CD4-positive, alpha-beta memory T cell (primary cell): ENCODE measurements at regions of chr2 and their contacts with region 1.

Region 1: DNA sequence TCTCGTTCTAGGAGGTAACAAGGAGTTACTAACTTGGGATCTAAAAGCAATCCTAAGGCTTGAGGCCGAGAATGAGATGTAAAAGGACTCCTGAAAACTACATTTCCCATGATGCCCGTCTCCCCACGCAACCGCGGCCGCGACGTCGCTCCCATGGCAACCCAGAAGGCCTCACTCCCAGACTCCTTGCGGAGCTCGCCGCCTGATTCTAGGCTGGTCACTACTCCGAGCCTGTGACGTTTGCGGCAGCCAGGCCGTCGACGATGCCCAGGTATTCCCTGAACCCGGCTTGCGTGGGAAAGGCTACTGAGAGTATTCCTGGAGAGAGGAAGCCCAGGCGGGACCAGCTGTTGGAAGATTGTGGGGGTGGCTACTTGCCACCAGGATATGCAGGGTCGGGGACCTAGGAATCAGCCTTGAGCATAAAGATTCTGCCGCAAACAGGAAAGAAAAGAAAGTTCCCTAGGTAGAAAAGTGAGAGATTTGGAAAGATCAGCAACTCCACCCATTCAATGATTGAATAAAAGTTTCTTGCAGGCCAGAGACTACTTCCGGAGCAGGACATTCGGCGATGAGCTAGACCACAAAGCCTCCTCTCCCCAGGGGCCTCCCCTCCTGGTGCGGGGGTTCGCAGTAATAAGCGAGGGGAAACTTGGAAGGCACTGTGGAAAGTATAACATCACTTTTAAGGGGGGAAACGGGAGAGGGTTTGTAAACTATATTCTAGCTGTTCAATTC is at the start of gene DYNC2LI1:
- DNase-seq: peak; percentile 65 to 75 (median 70)
- H3K4me3 ChIP-seq: peak within 1 kb of the TSS; percentile 93 to 100
- H3K4me3 Mint-ChIP-seq: peak within 1 kb of the TSS; percentile 93 to 98 (median 96)
- H3K27ac ChIP-seq: peak within 1 kb of the TSS; percentile 53
- H3K27ac Mint-ChIP-seq: peak within 1 kb of the TSS; percentile 58 to 97 (median 91)
- H3K4me1 ChIP-seq: peaks cover 12% of the 10 kb centered on the region
- H3K4me1 Mint-ChIP-seq: peaks cover 7 to 13% (median 11%) of the 10 kb centered on the region in 4 donors
- H3K27me3 ChIP-seq: no peaks in the 10 kb centered on the region
- H3K27me3 Mint-ChIP-seq: peaks cover 3% of the 10 kb centered on the region in 2 donors
- total RNA-seq, gene DYNC2LI1: 2.9 to 3.9 TPM

Region 2: DNA sequence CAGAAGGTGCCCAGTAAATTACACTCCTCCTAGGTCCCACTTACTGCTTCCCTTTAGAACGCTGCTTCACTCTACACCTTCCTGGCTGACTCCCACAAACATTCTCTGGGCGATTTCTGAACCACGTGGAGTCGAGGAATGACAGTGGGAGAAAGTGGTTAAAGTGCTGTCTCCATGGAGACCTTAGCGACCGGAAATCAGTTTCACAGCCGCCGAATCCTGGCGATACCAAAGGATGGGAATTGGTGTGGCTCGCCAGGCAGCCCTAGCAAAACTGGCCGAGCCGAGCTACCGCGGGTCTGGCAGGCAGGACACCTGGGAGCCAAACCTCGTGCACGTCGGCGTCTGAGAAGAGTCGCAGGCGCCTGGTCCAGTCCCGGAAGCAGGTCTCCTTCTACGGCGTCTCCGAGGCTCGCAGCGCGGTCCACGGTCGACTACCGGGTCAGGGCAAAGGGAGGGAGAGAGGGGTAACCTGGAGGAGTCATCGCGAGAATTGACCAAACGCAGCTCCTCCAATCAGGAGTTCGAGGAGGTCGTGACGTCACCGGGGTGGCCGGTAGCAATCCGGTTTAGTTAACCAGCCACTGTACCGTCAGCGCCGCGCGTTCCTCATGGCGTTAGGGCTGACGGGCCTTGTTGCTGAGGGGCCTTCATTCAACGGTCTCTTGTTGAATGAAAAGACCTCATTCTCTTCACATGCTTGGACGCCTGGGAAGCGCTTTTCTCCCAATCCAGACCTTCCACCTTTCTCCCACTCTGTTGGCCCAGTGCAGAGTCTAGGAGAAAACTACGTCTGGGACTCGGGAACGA is 178.2 kb before region 1 on chr2 and contains the start of gene THADA:
- CTCF ChIA-PET with region 1: no interaction called
- POLR2A ChIA-PET with region 1: no interaction called
- intact Hi-C with region 1: no loop called
- DNase-seq: peak; percentile 93 to 95 (median 95)
- H3K4me3 ChIP-seq: peak within 1 kb of the TSS; percentile 73 to 82
- H3K4me3 Mint-ChIP-seq: peak within 1 kb of the TSS; percentile 91 to 97 (median 96)
- H3K27ac ChIP-seq: peak within 1 kb of the TSS; percentile 89
- H3K27ac Mint-ChIP-seq: peak within 1 kb of the TSS; percentile 97 to 99 (median 99)
- H3K4me1 ChIP-seq: peaks cover 28% of the 10 kb centered on the region
- H3K4me1 Mint-ChIP-seq: peaks cover 22 to 44% (median 30%) of the 10 kb centered on the region in 4 donors
- H3K27me3 ChIP-seq: no peaks in the 10 kb centered on the region
- H3K27me3 Mint-ChIP-seq: no peaks in the 10 kb centered on the region
- total RNA-seq, gene THADA: 42.1 to 44.8 TPM

Region 3: DNA sequence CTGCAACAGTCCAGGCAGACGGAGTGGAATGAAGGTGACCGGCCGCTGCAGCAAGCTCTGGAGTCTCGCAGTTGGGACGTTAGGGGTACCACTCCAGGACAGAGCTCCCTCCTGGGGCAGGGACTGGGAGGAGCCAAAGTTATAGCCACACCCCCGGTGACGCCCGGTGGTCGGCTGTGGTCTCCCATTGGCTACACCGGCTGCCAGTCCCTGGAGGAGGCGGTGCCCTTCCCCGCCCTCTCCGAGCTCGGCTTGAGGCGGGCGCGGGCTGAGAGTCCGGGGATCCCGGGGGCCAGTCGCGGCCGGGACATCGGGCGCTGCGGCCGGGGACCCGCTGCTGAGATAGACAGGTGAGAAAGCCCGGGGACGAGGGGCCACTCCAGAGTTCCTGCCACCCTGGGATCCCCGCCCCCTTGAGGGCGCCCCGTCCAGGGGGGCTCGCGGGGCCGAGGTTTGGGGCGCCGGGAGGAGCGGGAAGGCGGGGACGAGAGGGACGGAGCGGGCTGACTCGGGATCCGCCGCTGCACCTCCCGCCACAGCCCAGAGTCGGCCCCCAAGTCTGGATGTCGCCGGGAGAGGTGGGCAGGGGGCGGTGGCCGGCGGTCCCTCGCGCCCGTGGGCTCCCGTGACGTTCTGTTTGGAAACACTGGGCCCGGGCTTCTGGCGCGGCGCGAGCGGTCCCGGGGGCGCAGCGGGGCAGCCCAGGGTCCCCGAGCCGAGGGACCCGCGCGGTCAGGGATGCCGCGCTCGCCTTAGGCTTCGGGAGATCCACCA is 136.8 kb before region 1 on chr2 and contains the start of gene PLEKHH2:
- CTCF ChIA-PET with region 1: no interaction called
- POLR2A ChIA-PET with region 1: no interaction called
- intact Hi-C with region 1: loop called (anchors 10 kb)
- DNase-seq: peak; percentile 80 to 84 (median 80)
- H3K4me3 ChIP-seq: peak within 1 kb of the TSS; percentile 45 to 66
- H3K4me3 Mint-ChIP-seq: peak within 1 kb of the TSS; percentile 89 to 96 (median 94)
- H3K27ac ChIP-seq: no peak within 1 kb of the TSS
- H3K27ac Mint-ChIP-seq: peak within 1 kb of the TSS; percentile 58 to 95 (median 73)
- H3K4me1 ChIP-seq: peaks cover 4% of the 10 kb centered on the region
- H3K4me1 Mint-ChIP-seq: peaks cover 7 to 15% (median 14%) of the 10 kb centered on the region in 4 donors
- H3K27me3 ChIP-seq: no peaks in the 10 kb centered on the region
- H3K27me3 Mint-ChIP-seq: peaks cover 20 to 22% of the 10 kb centered on the region in 2 donors
- total RNA-seq, gene PLEKHH2: 1.2 TPM

Region 4: DNA sequence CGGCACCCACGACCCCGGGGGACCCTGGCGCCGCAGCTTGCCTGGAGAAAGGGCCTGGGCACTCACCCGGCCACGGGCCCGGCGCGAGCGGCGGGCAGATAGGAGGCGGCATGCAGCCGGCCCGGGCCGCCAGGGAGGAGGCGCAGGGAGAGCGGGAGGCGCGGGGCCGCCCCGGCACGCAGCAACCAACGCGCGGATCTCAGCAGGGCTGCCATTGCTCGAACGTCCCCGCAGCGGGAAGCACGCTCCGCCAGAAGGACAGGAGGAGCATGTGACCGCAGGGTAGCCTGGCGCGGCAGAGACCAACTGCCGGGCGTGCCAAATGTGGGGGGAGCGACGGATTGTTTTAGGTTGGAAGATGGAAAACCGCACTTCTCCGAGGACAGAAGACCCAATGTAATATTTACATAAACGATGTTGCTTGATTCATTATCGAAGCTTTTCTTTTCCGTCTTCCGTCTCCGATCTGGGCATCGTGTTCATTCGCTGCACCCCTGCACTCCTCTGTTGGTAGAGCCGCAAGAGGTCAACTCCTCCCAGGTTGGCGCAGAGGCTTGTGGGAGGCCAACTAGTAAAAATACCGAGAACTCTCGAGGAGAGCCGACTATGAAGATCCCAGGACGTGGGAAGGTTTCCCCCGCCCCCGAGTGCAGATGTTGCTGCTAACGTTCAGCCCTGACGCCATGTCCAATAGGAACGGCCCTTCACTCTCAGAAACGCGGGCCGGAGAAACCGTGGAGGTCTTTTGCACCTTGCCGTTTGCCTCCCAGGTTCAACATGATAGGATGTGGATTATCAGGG is 221.9 kb after region 1 on chr2 and contains the start of gene LRPPRC:
- CTCF ChIA-PET with region 1: no interaction called
- POLR2A ChIA-PET with region 1: no interaction called
- intact Hi-C with region 1: loop called (anchors 2 kb)
- DNase-seq: peak; percentile 90 to 94 (median 94)
- H3K4me3 ChIP-seq: peak within 1 kb of the TSS; percentile 84 to 94
- H3K4me3 Mint-ChIP-seq: peak within 1 kb of the TSS; percentile 87 to 97 (median 94)
- H3K27ac ChIP-seq: peak within 1 kb of the TSS; percentile 79
- H3K27ac Mint-ChIP-seq: peak within 1 kb of the TSS; percentile 93 to 100 (median 97)
- H3K4me1 ChIP-seq: peaks cover 40% of the 10 kb centered on the region
- H3K4me1 Mint-ChIP-seq: peaks cover 33 to 58% (median 49%) of the 10 kb centered on the region in 4 donors
- H3K27me3 ChIP-seq: no peaks in the 10 kb centered on the region
- H3K27me3 Mint-ChIP-seq: peaks cover 0 to 2% of the 10 kb centered on the region in 2 donors
- total RNA-seq, gene LRPPRC: 61.5 to 65.3 TPM